Caco-2 (cell line): ENCODE measurements at regions of chr6 and their contacts with region 1.

Region 1: GRCh38 chr6:99119109-99120031 is 171.6 kb upstream of the FBXL4 start:
- DNase-seq: peak in 1 of 2 experiments; percentile 42
- H3K4me3 ChIP-seq: no peak overlapping the region
- H3K4me3 Mint-ChIP-seq: no peak overlapping the region
- H3K27ac Mint-ChIP-seq: no peak overlapping the region
- H3K4me1 ChIP-seq: no peaks in the 10 kb centered on the region
- H3K4me1 Mint-ChIP-seq: no peaks in the 10 kb centered on the region
- H3K27me3 ChIP-seq: no peaks in the 10 kb centered on the region
- H3K27me3 Mint-ChIP-seq: peaks cover 15% of the 10 kb centered on the region
- CTCF ChIP-seq: peak; percentile 51 to 66

Region 2: GRCh38 chr6:98845211-98846020 is 274.0 kb before region 1 on chr6:
- CTCF ChIA-PET with region 1: no interaction called
- POLR2A ChIA-PET with region 1: no interaction called
- intact Hi-C with region 1: loop called (anchors 1 kb)
- DNase-seq: peak; percentile 66 to 79
- H3K4me3 ChIP-seq: no peak overlapping the region
- H3K4me3 Mint-ChIP-seq: peak overlapping the region; percentile 56
- H3K27ac Mint-ChIP-seq: no peak overlapping the region
- H3K4me1 ChIP-seq: 0 out of 2 replicates have a peak, but pooled peaks cover 4% of the 10 kb centered on the region
- H3K4me1 Mint-ChIP-seq: no peaks in the 10 kb centered on the region
- H3K27me3 ChIP-seq: no peaks in the 10 kb centered on the region; the same call in 1 of the 2 replicates
- H3K27me3 Mint-ChIP-seq: peaks cover 34% of the 10 kb centered on the region
- CTCF ChIP-seq: peak; percentile 85 to 88

Region 3: GRCh38 chr6:99032396-99032795 is 87.0 kb before region 1 on chr6:
- CTCF ChIA-PET with region 1: no interaction called
- POLR2A ChIA-PET with region 1: no interaction called
- intact Hi-C with region 1: no loop called
- DNase-seq: no peak
- H3K4me3 ChIP-seq: no peak overlapping the region
- H3K4me3 Mint-ChIP-seq: no peak overlapping the region
- H3K27ac Mint-ChIP-seq: no peak overlapping the region
- H3K4me1 ChIP-seq: no peaks in the 10 kb centered on the region
- H3K4me1 Mint-ChIP-seq: no peaks in the 10 kb centered on the region
- H3K27me3 ChIP-seq: no peaks in the 10 kb centered on the region; the same call in 1 of the 2 replicates
- H3K27me3 Mint-ChIP-seq: peaks cover 11% of the 10 kb centered on the region
- CTCF ChIP-seq: no peak